Transverse colon (tissue), 4 donors: ENCODE measurements at regions of chr7 and their contacts with region 1.

Region 1: GRCh38 chr7:15720849-15721471 is 34.5 kb upstream of the MEOX2 start:
- DNase-seq: peak; percentile 32
- H3K4me3 ChIP-seq: no peak overlapping the region
- H3K27ac ChIP-seq: no peak overlapping the region
- H3K4me1 ChIP-seq: no peaks in the 10 kb centered on the region
- H3K27me3 ChIP-seq: no peaks in the 10 kb centered on the region
- CTCF ChIP-seq: peak; percentile 65 to 80 (median 67)
- EP300 ChIP-seq: no peak
- POLR2A ChIP-seq: no peak

Region 2: GRCh38 chr7:15326044-15326644 is 394.8 kb before region 1 on chr7:
- in situ Hi-C with region 1: loop called in 3 of 4 experiments (anchors 10 to 25 kb)
- intact Hi-C with region 1: no loop called
- DNase-seq: no peak
- H3K4me3 ChIP-seq: no peak overlapping the region
- H3K27ac ChIP-seq: no peak overlapping the region
- H3K4me1 ChIP-seq: no peaks in the 10 kb centered on the region
- H3K27me3 ChIP-seq: no peaks in the 10 kb centered on the region
- CTCF ChIP-seq: peak; percentile 34 to 52 (median 44)
- EP300 ChIP-seq: no peak
- POLR2A ChIP-seq: no peak

Region 3: DNA sequence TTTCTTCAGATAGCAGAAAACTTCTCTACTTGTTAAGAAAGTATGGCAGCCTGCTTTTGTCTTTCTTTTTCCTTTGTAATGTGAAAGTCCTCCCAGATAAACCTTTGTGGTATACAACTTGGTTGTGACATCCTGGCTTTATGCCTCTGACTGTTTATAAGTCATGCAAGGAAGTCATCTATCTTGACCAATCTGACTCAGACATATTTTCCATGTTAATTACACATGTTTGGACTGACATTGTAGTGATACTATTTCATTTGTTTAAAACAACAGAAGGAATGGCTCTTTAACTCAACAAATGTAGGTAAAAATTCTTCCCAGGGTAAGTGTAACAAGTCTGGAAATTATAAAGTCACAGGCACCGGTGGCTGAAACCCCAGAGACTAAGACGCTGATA is 307.1 kb after region 1 on chr7:
- in situ Hi-C with region 1: no loop called
- intact Hi-C with region 1: no loop called
- DNase-seq: no peak
- H3K4me3 ChIP-seq: no peak overlapping the region
- H3K27ac ChIP-seq: peak overlapping the region in 3 of 4 donors; percentile 31 to 50 (median 44)
- H3K4me1 ChIP-seq: peaks cover 0 to 9% (median 0%) of the 10 kb centered on the region in 4 donors
- H3K27me3 ChIP-seq: no peaks in the 10 kb centered on the region
- CTCF ChIP-seq: no peak
- EP300 ChIP-seq: no peak
- POLR2A ChIP-seq: no peak

Region 4: GRCh38 chr7:16071246-16071857 is 350.4 kb after region 1 on chr7:
- in situ Hi-C with region 1: loop called in 3 of 4 experiments (anchors 25 kb)
- intact Hi-C with region 1: no loop called
- DNase-seq: peak; percentile 10
- H3K4me3 ChIP-seq: no peak overlapping the region
- H3K27ac ChIP-seq: no peak overlapping the region
- H3K4me1 ChIP-seq: peaks cover 0 to 4% (median 0%) of the 10 kb centered on the region in 4 donors
- H3K27me3 ChIP-seq: no peaks in the 10 kb centered on the region
- CTCF ChIP-seq: peak; percentile 79 to 90 (median 84)
- EP300 ChIP-seq: no peak
- POLR2A ChIP-seq: no peak